Lower leg skin (tissue), 4 donors: ENCODE measurements at regions of chr9 and their contacts with region 1.

Region 1: DNA sequence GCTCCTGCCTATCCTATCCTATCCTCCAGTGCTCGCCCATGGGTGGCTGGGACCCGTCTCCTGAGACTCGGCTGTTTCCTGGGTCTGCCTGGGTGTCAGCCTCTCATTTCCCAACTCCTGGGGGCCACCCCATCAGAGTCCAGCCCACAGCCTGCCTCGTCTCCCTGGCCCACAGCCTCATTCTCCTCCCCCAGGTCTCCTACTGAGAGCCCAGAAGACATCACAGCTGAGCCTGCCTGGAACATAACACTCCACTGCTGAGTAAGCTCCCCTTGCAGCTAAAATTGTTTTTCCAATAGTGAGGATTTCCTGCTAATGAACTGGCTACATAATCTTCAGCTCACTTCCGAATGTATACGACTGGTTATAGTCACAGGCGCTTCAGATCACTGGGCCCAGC is 95.3 kb downstream of the TTLL11 start:
- DNase-seq: peak in 1 of 2 donors; percentile 77
- H3K4me3 ChIP-seq: no peak overlapping the region
- CTCF ChIP-seq: no peak
- POLR2A ChIP-seq: no peak

Region 2: DNA sequence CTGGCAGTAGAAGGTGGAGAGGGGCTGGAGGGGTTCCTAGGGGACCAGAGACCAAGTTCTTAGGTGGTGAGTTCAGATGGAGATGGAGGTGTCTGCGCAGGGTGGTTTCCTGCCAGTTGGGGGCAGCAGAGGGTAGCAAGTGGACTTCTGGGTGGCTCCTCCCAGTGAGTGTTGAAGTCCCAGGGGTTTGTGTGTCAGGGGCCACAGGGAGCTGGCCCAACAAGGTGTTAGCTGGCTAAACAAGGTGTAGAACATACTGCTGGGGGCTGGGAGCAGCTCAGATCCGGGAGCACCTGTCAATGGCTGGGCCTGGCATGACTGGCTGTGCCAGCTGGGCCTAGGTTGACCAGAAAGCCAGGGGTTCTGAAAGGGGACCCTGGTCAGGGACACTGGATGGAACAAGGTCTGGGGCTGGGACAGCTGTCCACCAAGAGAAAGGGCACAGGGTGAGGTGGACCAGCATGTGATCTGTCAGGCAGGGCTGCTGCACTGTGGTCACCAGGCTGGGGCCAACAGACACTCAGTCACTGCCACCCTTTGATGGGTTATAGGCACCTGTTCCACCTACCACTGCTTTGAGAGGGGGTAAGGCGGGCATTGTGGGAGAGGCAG is 310.8 kb before region 1 on chr9:
- intact Hi-C with region 1: loop called (anchors 5 kb)
- DNase-seq: peak; percentile 47 to 96
- H3K4me3 ChIP-seq: no peak overlapping the region
- CTCF ChIP-seq: peak in 1 of 3 donors; percentile 74
- POLR2A ChIP-seq: no peak

Region 3: GRCh38 chr9:121725008-121725775 is 272.6 kb before region 1 on chr9:
- intact Hi-C with region 1: no loop called
- DNase-seq: peak; percentile 93 to 98
- H3K4me3 ChIP-seq: no peak overlapping the region
- CTCF ChIP-seq: no peak
- POLR2A ChIP-seq: no peak